ENCODE measurements at regions of chr17 and their contacts with region 1.

Region 1: DNA sequence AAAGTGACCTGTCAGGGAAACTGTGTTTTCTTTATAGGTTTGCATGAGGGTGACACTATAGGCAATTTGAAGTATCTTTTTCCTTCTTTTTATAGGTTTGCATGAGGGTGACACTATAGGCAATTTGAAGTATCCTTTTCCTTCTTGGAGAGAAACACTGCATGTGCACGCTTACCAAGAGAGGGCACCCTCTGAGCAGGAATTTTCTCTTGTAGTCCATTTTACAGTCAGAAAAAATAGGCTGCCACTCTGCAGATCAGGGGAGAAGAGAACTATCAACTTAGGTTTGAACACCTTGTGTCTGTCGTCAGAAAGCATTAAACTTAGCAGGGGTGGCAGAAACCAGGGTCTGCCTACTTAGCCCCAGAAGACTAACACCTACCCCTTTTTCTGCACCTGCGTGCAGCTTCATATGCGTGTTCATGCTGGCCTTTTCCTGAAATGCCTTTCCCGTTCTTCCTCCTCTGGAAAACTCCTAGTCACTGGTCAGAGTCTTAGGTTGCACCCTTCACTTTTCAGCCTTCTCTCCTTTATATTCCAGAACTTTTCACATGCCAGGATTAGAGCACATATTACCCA is 16.4 kb upstream of the SMIM36 start:
- DNase-seq: no peak
- ATAC-seq: peak; percentile 71
- H3K4me3 ChIP-seq: no peak overlapping the region
- H3K27ac ChIP-seq: no peak overlapping the region
- H3K4me1 ChIP-seq: no peaks in the 10 kb centered on the region
- H3K27me3 ChIP-seq: no peaks in the 10 kb centered on the region
- CTCF ChIP-seq: peak; percentile 57

Region 2: DNA sequence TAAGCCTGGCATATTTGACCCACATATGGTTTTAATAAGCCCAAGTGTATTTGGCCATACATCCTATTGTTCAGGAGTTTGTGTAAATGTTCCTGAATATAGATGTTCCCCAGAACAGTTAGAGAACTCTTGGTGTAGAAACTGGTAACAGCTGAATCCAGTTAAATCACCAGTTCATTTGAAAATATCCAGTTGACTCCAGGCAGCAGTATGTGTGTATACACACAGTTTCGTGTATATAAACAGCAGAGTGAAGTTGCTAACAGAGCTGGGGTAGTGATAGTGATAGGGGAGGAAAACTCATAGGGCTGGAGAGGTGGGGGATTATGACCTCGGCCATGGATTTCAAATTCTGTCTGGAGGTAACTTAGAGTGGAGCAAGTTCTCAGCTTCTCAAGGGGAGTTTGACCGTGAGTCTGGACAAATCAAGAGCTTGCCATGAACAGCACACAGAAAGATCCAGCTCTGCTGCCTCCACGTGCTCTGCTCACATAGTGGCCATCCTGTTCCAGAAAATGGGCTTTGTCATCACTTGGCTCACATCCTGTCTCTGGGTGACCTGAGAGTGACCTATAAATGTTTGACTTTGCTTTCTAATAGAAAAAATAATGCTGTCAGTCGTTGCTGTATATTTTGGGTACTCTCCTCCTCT is 75.4 kb before region 1 on chr17:
- intact Hi-C with region 1: no loop called
- DNase-seq: no peak
- ATAC-seq: peak; percentile 70
- H3K4me3 ChIP-seq: no peak overlapping the region
- H3K27ac ChIP-seq: no peak overlapping the region
- H3K4me1 ChIP-seq: peaks cover 11% of the 10 kb centered on the region
- H3K27me3 ChIP-seq: no peaks in the 10 kb centered on the region
- CTCF ChIP-seq: no peak

Region 3: DNA sequence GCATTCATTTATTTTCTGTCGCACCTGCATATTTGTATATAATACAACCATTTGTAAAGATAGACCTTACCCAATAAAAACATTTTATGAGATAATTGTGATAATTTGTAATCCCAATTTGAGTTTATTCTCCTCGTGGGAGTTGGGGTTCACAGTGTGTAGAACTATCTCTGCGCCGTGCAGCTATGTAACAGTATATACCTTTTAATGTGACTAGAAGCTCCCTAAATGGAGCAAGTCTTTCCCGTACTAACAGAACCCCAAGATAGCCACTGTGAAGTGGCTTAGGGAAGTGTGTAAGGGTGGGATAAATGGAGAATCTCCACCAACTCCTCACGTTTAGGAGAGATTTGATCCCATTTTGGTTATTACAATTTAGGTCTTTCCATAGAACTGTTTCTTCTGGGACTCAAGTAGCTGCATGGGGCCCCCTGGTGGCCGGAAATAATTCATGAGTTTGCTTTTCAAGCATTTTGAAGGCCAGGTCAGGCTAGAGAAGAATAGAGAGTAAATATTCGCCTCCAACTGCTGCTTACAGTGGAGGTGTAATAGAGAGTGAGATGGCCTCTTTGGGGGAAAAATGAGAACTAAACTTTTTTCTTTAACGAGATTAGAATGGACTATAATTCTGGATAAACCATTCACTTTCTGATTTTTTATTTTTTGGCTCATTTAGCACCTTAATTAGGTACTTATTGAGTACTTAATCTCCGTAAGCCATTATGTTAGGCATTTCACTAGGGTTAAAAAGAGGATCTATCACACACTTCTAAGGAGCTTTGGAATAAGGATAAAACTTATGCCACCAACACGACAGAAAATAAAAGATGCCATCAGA is 190.5 kb after region 1 on chr17:
- intact Hi-C with region 1: loop called (anchors 10 kb)
- DNase-seq: peak; percentile 69
- ATAC-seq: peak; percentile 75
- H3K4me3 ChIP-seq: no peak overlapping the region
- H3K27ac ChIP-seq: peak overlapping the region; percentile 80
- H3K4me1 ChIP-seq: no peaks in the 10 kb centered on the region
- H3K27me3 ChIP-seq: peaks cover 6% of the 10 kb centered on the region
- CTCF ChIP-seq: peak; percentile 86

Region 4: GRCh38 chr17:55770148-55770870 is 242.7 kb after region 1 on chr17:
- intact Hi-C with region 1: loop called (anchors 10 kb)
- DNase-seq: no peak
- ATAC-seq: peak; percentile 62
- H3K4me3 ChIP-seq: no peak overlapping the region
- H3K27ac ChIP-seq: peak overlapping the region; percentile 13
- H3K4me1 ChIP-seq: no peaks in the 10 kb centered on the region
- H3K27me3 ChIP-seq: no peaks in the 10 kb centered on the region
- CTCF ChIP-seq: peak; percentile 56

Region 5: GRCh38 chr17:56108811-56109284 is 581.2 kb after region 1 on chr17:
- intact Hi-C with region 1: no loop called
- DNase-seq: no peak
- ATAC-seq: peak; percentile 73
- H3K4me3 ChIP-seq: no peak overlapping the region
- H3K27ac ChIP-seq: no peak overlapping the region
- H3K4me1 ChIP-seq: no peaks in the 10 kb centered on the region
- H3K27me3 ChIP-seq: no peaks in the 10 kb centered on the region
- CTCF ChIP-seq: no peak

Measured in upper lobe of right lung (tissue), 1 donor.